CD8-positive, alpha-beta T cell (primary cell): ENCODE measurements at regions of chr12 and their contacts with region 1.

Region 1: GRCh38 chr12:109093022-109093918 is at the start of gene ALKBH2:
- DNase-seq: peak; percentile 89 to 99 (median 95)
- ATAC-seq: peak; percentile 77
- H3K4me3 ChIP-seq: peak within 1 kb of the TSS; percentile 63 to 78
- H3K4me3 Mint-ChIP-seq: peak within 1 kb of the TSS; percentile 83
- H3K27ac ChIP-seq: peak within 1 kb of the TSS; percentile 65 to 69
- H3K27ac Mint-ChIP-seq: peak within 1 kb of the TSS; percentile 91
- H3K4me1 ChIP-seq: peaks cover 27% of the 10 kb centered on the region
- H3K4me1 Mint-ChIP-seq: peaks cover 40% of the 10 kb centered on the region
- H3K27me3 ChIP-seq: no peaks in the 10 kb centered on the region
- H3K27me3 Mint-ChIP-seq: no peaks in the 10 kb centered on the region
- CTCF ChIP-seq: peak; percentile 94
- total RNA-seq, gene ALKBH2: 9.8 to 12.8 TPM

Region 2: DNA sequence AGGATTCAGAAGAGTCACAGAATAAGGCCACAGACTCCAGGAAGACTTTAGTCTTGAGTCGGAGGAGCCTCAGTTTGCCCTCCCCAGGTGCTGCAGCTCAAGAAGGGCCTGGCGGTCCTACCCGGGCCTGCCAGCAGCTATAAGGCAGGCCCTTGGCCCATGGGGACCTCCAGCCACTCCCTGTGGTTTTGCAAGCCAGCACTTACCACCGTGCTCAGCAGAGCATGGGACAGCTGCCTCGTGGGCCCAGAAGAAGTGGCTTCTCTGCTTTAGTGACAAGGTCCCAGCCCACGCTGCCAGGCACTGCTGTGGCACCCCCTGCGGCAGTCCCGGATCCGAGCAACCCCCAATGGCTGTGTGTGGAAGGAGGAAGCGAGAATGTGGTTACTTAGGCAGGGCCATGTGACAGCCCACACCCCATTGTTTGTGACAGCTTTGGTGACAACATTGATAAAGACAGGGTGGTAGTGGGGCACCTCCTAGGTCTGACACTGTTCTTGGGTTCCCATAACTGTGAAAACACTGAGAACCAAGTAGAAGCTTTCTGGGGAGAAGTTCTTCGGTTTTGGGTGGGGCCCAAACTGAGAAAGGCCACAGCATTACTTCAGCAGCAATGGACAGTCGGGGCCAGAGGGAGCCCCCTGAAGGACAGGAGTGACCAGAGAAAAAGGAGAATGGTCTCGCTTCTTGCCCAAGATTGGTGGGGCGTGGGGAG is 459.6 kb before region 1 on chr12 and contains the start of gene SELPLG:
- CTCF ChIA-PET with region 1: interaction called, 4 read pairs
- POLR2A ChIA-PET with region 1: no interaction called
- intact Hi-C with region 1: loop called in 1 of 2 experiments (anchors 10 kb)
- DNase-seq: peak; percentile 77 to 97 (median 88)
- ATAC-seq: peak; percentile 60
- H3K4me3 ChIP-seq: peak within 1 kb of the TSS; percentile 71 to 95
- H3K4me3 Mint-ChIP-seq: peak within 1 kb of the TSS; percentile 100
- H3K27ac ChIP-seq: peak within 1 kb of the TSS; percentile 91 to 92
- H3K27ac Mint-ChIP-seq: peak within 1 kb of the TSS; percentile 100
- H3K4me1 ChIP-seq: peaks cover 73% of the 10 kb centered on the region
- H3K4me1 Mint-ChIP-seq: peaks cover 71% of the 10 kb centered on the region
- H3K27me3 ChIP-seq: no peaks in the 10 kb centered on the region
- H3K27me3 Mint-ChIP-seq: no peaks in the 10 kb centered on the region
- CTCF ChIP-seq: peak; percentile 23
- total RNA-seq, gene SELPLG: 30.4 to 32.3 TPM

Region 3: DNA sequence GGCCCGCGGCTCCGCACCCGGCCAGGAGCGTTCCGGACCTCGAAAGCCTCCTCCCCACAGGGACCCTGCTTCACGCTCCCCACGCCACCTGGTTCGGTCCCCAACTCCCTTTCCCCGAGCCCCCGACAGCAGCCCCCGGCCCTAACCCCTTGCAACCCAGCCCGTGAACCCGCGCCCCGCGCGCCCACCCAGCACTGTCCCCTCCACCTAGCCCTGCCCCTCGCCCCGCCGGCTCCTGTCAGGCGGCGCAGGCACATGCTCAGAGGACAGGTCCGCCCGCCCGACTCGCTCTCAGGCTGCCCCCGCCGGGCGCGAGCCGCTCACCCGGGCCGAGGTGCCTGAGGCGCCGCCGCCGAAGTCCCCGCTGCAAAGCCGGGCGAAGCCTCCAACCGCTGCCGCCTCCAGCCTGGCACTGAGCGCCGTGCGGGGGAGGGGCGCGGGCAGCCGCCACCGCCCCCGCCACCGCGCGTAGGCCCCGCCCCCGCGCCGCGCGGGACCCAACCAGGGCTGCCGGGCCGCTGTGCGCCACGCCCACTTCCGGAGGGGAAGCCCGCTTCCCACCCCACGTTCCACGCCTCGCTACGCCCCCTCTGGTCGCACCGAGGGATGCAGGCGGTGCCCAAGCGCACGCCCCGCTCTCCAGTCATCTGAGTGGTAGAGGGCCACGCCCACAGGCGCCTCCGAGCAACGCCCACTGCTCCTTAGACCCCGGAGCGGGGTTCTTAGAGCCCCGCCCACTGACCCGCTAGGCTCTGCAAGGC is 362.0 kb before region 1 on chr12 and contains the start of gene CORO1C:
- CTCF ChIA-PET with region 1: no interaction called
- POLR2A ChIA-PET with region 1: no interaction called
- intact Hi-C with region 1: loop called (anchors 1 to 5 kb)
- DNase-seq: peak; percentile 86 to 97 (median 92)
- ATAC-seq: peak; percentile 75
- H3K4me3 ChIP-seq: peak within 1 kb of the TSS; percentile 91 to 93
- H3K4me3 Mint-ChIP-seq: peak within 1 kb of the TSS; percentile 94
- H3K27ac ChIP-seq: peak within 1 kb of the TSS; percentile 67 to 85
- H3K27ac Mint-ChIP-seq: peak within 1 kb of the TSS; percentile 86
- H3K4me1 ChIP-seq: peaks cover 7% of the 10 kb centered on the region
- H3K4me1 Mint-ChIP-seq: peaks cover 26% of the 10 kb centered on the region
- H3K27me3 ChIP-seq: no peaks in the 10 kb centered on the region
- H3K27me3 Mint-ChIP-seq: no peaks in the 10 kb centered on the region
- CTCF ChIP-seq: peak; percentile 74
- total RNA-seq, gene CORO1C: 10.3 to 15.4 TPM

Region 4: GRCh38 chr12:108856428-108857157 is 236.7 kb before region 1 on chr12:
- CTCF ChIA-PET with region 1: no interaction called
- POLR2A ChIA-PET with region 1: no interaction called
- intact Hi-C with region 1: loop called (anchors 1 to 2 kb)
- DNase-seq: peak; percentile 27 to 92 (median 64)
- ATAC-seq: peak; percentile 70
- H3K4me3 ChIP-seq: peak overlapping the region; percentile 58 to 71
- H3K4me3 Mint-ChIP-seq: peak overlapping the region; percentile 98
- H3K27ac ChIP-seq: peak overlapping the region; percentile 54 to 77
- H3K27ac Mint-ChIP-seq: peak overlapping the region; percentile 97
- H3K4me1 ChIP-seq: peaks cover 27% of the 10 kb centered on the region
- H3K4me1 Mint-ChIP-seq: peaks cover 46% of the 10 kb centered on the region
- H3K27me3 ChIP-seq: peaks cover 0 to 2% of the 10 kb centered on the region in 2 experiments
- H3K27me3 Mint-ChIP-seq: no peaks in the 10 kb centered on the region
- CTCF ChIP-seq: no peak

Region 5: GRCh38 chr12:108950991-108951739 is 142.1 kb before region 1 on chr12:
- CTCF ChIA-PET with region 1: interaction called, 5 read pairs
- POLR2A ChIA-PET with region 1: no interaction called
- intact Hi-C with region 1: loop called (anchors 1 to 2 kb)
- DNase-seq: peak; percentile 43 to 83 (median 69)
- ATAC-seq: peak; percentile 91
- H3K4me3 ChIP-seq: no peak overlapping the region
- H3K4me3 Mint-ChIP-seq: no peak overlapping the region
- H3K27ac ChIP-seq: no peak overlapping the region
- H3K27ac Mint-ChIP-seq: no peak overlapping the region
- H3K4me1 ChIP-seq: no peaks in the 10 kb centered on the region
- H3K4me1 Mint-ChIP-seq: peaks cover 6% of the 10 kb centered on the region
- H3K27me3 ChIP-seq: no peaks in the 10 kb centered on the region
- H3K27me3 Mint-ChIP-seq: peaks cover 16% of the 10 kb centered on the region
- CTCF ChIP-seq: peak; percentile 86

Region 6: GRCh38 chr12:109033234-109034196 is 59.8 kb before region 1 on chr12:
- CTCF ChIA-PET with region 1: no interaction called
- POLR2A ChIA-PET with region 1: no interaction called
- intact Hi-C with region 1: no loop called
- DNase-seq: no peak
- ATAC-seq: no peak
- H3K4me3 ChIP-seq: no peak overlapping the region
- H3K4me3 Mint-ChIP-seq: no peak overlapping the region
- H3K27ac ChIP-seq: no peak overlapping the region
- H3K27ac Mint-ChIP-seq: no peak overlapping the region
- H3K4me1 ChIP-seq: no peaks in the 10 kb centered on the region
- H3K4me1 Mint-ChIP-seq: no peaks in the 10 kb centered on the region
- H3K27me3 ChIP-seq: peaks cover 0 to under 1% of the 10 kb centered on the region in 2 experiments
- H3K27me3 Mint-ChIP-seq: peaks cover 13% of the 10 kb centered on the region
- CTCF ChIP-seq: no peak

Region 7: GRCh38 chr12:109110988-109111495 is 17.8 kb after region 1 on chr12:
- CTCF ChIA-PET with region 1: interaction called, 33 read pairs
- POLR2A ChIA-PET with region 1: no interaction called
- intact Hi-C with region 1: loop called in 1 of 2 experiments (anchors 1 kb)
- DNase-seq: peak; percentile 11 to 74 (median 55)
- ATAC-seq: peak; percentile 75
- H3K4me3 ChIP-seq: peak overlapping the region; percentile 57 to 71
- H3K4me3 Mint-ChIP-seq: peak overlapping the region; percentile 83
- H3K27ac ChIP-seq: peak overlapping the region; percentile 64 to 73
- H3K27ac Mint-ChIP-seq: peak overlapping the region; percentile 85
- H3K4me1 ChIP-seq: peaks cover 7% of the 10 kb centered on the region
- H3K4me1 Mint-ChIP-seq: peaks cover 36% of the 10 kb centered on the region
- H3K27me3 ChIP-seq: no peaks in the 10 kb centered on the region
- H3K27me3 Mint-ChIP-seq: no peaks in the 10 kb centered on the region
- CTCF ChIP-seq: no peak

Region 8: GRCh38 chr12:109291521-109292341 is 198.5 kb after region 1 on chr12:
- CTCF ChIA-PET with region 1: no interaction called
- POLR2A ChIA-PET with region 1: no interaction called
- intact Hi-C with region 1: no loop called
- DNase-seq: no peak
- ATAC-seq: no peak
- H3K4me3 ChIP-seq: no peak overlapping the region
- H3K4me3 Mint-ChIP-seq: no peak overlapping the region
- H3K27ac ChIP-seq: no peak overlapping the region
- H3K27ac Mint-ChIP-seq: no peak overlapping the region
- H3K4me1 ChIP-seq: no peaks in the 10 kb centered on the region
- H3K4me1 Mint-ChIP-seq: no peaks in the 10 kb centered on the region
- H3K27me3 ChIP-seq: peaks cover 0 to 3% of the 10 kb centered on the region in 2 experiments
- H3K27me3 Mint-ChIP-seq: peaks cover 28% of the 10 kb centered on the region
- CTCF ChIP-seq: no peak

Region 9: GRCh38 chr12:109995686-109996482 is 902.6 kb after region 1 on chr12 and contains the start of gene GIT2:
- CTCF ChIA-PET with region 1: no interaction called
- POLR2A ChIA-PET with region 1: no interaction called
- intact Hi-C with region 1: loop called (anchors 10 kb)
- DNase-seq: peak; percentile 87 to 98 (median 94)
- ATAC-seq: peak; percentile 76
- H3K4me3 ChIP-seq: peak within 1 kb of the TSS; percentile 79 to 89
- H3K4me3 Mint-ChIP-seq: peak within 1 kb of the TSS; percentile 97
- H3K27ac ChIP-seq: peak within 1 kb of the TSS; percentile 70 to 85
- H3K27ac Mint-ChIP-seq: peak within 1 kb of the TSS; percentile 89
- H3K4me1 ChIP-seq: peaks cover 34% of the 10 kb centered on the region
- H3K4me1 Mint-ChIP-seq: peaks cover 71% of the 10 kb centered on the region
- H3K27me3 ChIP-seq: no peaks in the 10 kb centered on the region
- H3K27me3 Mint-ChIP-seq: no peaks in the 10 kb centered on the region
- CTCF ChIP-seq: no peak
- total RNA-seq, gene GIT2: 47.6 to 57.9 TPM